Ascending aorta (tissue), 2 donors: ENCODE measurements at regions of chr2 and their contacts with region 1.

Region 1: GRCh38 chr2:85288244-85288725 is 39.5 kb downstream of the TGOLN2 start:
- DNase-seq: no peak
- H3K4me3 ChIP-seq: no peak overlapping the region
- H3K27ac ChIP-seq: no peak overlapping the region
- H3K4me1 ChIP-seq: peaks cover 0 to 2% of the 10 kb centered on the region in 2 donors
- H3K27me3 ChIP-seq: no peaks in the 10 kb centered on the region
- CTCF ChIP-seq: no peak

Region 2: GRCh38 chr2:85266146-85267041 is 21.9 kb before region 1 on chr2:
- intact Hi-C with region 1: loop called (anchors 1 kb)
- DNase-seq: peak in 1 of 2 donors; percentile 83
- H3K4me3 ChIP-seq: no peak overlapping the region
- H3K27ac ChIP-seq: peak overlapping the region; percentile 14 to 86
- H3K4me1 ChIP-seq: peaks cover 0 to 29% of the 10 kb centered on the region in 2 donors
- H3K27me3 ChIP-seq: no peaks in the 10 kb centered on the region
- CTCF ChIP-seq: peak; percentile 63 to 84 (median 79)